ENCODE measurements at regions of chr6 and their contacts with region 1.

Region 1: DNA sequence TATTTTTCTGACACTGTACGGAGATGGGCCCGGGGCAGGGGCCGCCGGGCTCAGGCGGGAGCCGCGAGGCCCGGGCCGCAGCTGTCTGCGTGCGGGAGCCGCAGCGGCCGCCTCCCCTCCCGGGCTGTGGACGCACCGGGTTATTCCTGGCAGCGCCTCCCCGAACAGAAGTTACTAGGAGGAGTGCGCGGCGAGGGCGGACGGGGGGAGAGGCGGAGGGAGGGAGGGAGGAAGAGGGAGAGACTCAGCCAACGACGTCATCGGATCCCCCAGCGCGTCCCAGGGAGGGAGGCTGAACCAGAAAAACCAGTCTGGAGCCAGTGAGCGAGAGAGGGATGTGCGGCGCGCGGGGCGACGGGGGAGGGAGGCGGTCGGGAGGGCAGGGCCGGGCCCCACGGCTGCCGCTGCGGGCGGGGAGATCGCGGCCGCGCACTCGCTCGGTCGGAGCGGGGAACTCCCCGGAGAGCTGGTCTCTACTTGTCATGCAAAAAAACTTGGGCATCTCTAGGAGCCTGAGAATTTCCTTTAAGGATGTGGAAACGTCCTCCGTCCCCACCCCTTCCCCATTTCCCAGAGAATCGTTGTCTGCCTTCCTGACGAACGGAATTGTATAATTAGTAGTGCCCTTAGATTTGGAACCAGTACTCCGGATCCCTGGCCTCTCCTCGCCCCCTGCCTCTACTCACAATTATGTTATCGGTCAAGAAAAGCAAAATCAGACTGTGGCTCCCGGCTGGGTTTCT is 1.4 kb upstream of the HIVEP2 start:
- DNase-seq: peak; percentile 93
- ATAC-seq: peak; percentile 32
- H3K4me3 Mint-ChIP-seq: peak overlapping the region; percentile 91
- H3K27ac Mint-ChIP-seq: peak overlapping the region; percentile 94
- H3K4me1 Mint-ChIP-seq: peaks cover 34% of the 10 kb centered on the region
- H3K27me3 Mint-ChIP-seq: peaks cover 2% of the 10 kb centered on the region
- CTCF ChIP-seq: no peak

Region 2: GRCh38 chr6:142474531-142475289 is 471.6 kb before region 1 on chr6:
- CTCF ChIA-PET with region 1: no interaction called
- POLR2A ChIA-PET with region 1: no interaction called
- intact Hi-C with region 1: loop called (anchors 10 kb)
- DNase-seq: no peak
- ATAC-seq: no peak
- H3K4me3 Mint-ChIP-seq: no peak overlapping the region
- H3K27ac Mint-ChIP-seq: no peak overlapping the region
- H3K4me1 Mint-ChIP-seq: peaks cover 5% of the 10 kb centered on the region
- H3K27me3 Mint-ChIP-seq: no peaks in the 10 kb centered on the region
- CTCF ChIP-seq: peak; percentile 90

Region 3: GRCh38 chr6:142819603-142820337 is 126.6 kb before region 1 on chr6:
- CTCF ChIA-PET with region 1: no interaction called
- POLR2A ChIA-PET with region 1: interaction called, 11 read pairs
- intact Hi-C with region 1: loop called (anchors 5 kb)
- DNase-seq: peak; percentile 71
- ATAC-seq: peak; percentile 63
- H3K4me3 Mint-ChIP-seq: peak overlapping the region; percentile 85
- H3K27ac Mint-ChIP-seq: peak overlapping the region; percentile 98
- H3K4me1 Mint-ChIP-seq: peaks cover 80% of the 10 kb centered on the region
- H3K27me3 Mint-ChIP-seq: no peaks in the 10 kb centered on the region
- CTCF ChIP-seq: no peak

Region 4: DNA sequence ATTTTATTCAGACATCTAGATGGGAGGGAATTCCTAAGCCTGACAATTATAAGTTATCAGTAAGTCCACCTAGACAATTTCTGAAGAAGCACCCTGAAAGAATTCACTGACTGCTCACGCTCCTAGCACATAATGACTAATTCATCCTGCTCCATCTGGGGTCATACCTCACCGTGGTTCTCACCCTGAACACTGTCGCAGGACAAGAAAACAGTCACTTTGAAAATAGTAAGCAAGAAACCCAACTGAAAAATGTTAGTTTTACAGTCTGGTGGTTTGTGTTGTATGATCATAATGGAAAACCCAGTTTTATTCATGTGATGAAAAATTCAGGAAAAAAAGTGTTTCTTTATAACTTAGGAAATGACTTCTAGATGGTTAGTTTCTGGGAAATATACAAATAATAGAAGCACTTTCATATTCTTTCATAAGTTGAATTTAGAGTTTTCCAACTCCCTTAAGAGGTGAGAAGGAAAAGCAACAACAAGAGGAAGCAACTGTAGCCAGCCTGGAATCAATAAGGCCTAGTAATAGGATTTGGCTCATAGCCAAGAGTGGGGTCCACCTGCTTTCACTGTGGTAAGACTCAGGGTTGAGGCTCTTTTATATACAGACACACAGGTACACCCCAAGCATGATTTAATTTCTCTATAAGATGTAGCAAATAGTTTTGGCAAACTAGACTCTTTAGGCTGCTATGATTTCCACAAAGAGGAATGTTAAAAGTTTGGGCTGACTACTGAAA is 95.5 kb before region 1 on chr6:
- CTCF ChIA-PET with region 1: interaction called, 6 read pairs
- POLR2A ChIA-PET with region 1: interaction called, 12 read pairs
- intact Hi-C with region 1: no loop called
- DNase-seq: peak; percentile 68
- ATAC-seq: peak; percentile 64
- H3K4me3 Mint-ChIP-seq: peak overlapping the region; percentile 40
- H3K27ac Mint-ChIP-seq: peak overlapping the region; percentile 93
- H3K4me1 Mint-ChIP-seq: peaks cover 97% of the 10 kb centered on the region
- H3K27me3 Mint-ChIP-seq: no peaks in the 10 kb centered on the region
- CTCF ChIP-seq: no peak

Region 5: GRCh38 chr6:142885182-142885867 is 61.0 kb before region 1 on chr6:
- CTCF ChIA-PET with region 1: interaction called, 4 read pairs
- POLR2A ChIA-PET with region 1: interaction called, 12 read pairs
- intact Hi-C with region 1: loop called (anchors 2 kb)
- DNase-seq: peak; percentile 58
- ATAC-seq: peak; percentile 81
- H3K4me3 Mint-ChIP-seq: peak overlapping the region; percentile 90
- H3K27ac Mint-ChIP-seq: peak overlapping the region; percentile 100
- H3K4me1 Mint-ChIP-seq: peaks cover 85% of the 10 kb centered on the region
- H3K27me3 Mint-ChIP-seq: no peaks in the 10 kb centered on the region
- CTCF ChIP-seq: no peak

Region 6: DNA sequence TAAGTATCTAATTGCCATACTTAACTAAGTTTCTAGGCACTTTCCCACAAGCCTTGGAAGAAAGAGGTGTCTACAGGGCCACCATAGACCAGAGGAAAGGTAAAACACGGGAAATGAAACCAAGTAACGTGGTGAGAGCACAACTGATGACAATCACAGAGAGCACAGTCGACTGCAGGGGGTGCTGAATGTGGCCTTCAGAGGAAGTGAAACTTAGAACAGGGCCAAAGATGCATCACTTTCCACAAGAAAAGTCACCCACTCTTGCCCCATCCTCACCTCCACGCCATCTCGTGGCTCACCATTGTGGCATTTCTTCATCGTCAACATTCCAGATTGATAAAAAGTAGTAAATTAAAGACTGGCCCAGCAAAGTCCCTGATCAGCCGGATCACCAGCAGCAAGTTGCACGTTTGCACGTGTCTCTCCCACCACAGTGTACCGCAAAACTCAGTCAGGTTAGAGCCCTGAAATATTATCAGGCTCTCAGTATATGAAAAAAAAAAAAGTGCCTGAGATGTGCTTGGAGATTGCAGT is 32.8 kb before region 1 on chr6:
- CTCF ChIA-PET with region 1: interaction called, 4 read pairs
- POLR2A ChIA-PET with region 1: interaction called, 13 read pairs
- intact Hi-C with region 1: loop called (anchors 5 kb)
- DNase-seq: peak; percentile 88
- ATAC-seq: peak; percentile 88
- H3K4me3 Mint-ChIP-seq: peak overlapping the region; percentile 70
- H3K27ac Mint-ChIP-seq: peak overlapping the region; percentile 98
- H3K4me1 Mint-ChIP-seq: peaks cover 82% of the 10 kb centered on the region
- H3K27me3 Mint-ChIP-seq: no peaks in the 10 kb centered on the region
- CTCF ChIP-seq: no peak

Region 7: DNA sequence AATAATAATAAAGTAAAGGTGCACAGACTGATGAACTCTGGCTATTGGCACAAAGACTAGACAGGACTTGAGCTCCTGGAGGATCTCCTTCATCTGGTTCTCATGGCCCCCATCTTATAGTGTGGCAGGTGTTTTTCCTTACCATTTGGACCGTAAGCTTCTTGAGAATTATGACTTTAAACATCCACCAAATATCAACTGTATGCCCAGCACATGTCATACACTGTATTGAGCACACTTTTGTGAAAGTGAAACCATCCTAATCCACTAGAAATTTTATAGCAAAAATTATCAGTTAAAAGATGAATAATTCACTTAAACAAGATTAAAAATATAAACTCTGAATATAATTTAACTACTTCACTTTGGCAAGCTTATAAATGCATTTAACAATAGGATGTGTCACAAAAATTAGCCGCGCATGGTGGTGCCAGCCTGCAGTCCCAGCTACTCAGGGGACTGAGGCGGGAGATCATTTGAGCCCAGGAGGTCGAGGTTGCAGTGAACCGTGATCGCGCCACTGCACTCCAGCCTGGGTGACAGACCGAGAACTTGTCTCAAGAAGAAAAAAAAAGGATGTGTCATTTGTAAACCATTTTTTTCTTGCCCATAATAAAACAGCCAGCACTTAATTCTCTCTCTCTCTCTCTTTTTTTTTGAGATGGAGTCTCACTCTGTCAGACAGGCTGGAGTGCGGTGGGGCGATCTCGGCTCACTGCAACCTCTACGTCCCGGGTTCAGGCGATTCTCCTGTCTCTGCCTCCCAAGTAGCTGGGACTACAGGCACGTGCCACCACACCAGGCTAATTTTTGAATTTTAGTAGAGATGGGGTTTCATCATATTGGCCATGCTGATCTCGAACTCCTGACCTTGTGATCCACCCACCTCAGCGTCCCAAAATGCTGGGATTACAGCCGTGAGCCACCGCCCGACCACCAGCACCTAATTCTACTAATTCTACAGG is 10.5 kb before region 1 on chr6:
- CTCF ChIA-PET with region 1: interaction called, 19 read pairs
- POLR2A ChIA-PET with region 1: interaction called, 85 read pairs
- intact Hi-C with region 1: no loop called
- DNase-seq: peak; percentile 64
- ATAC-seq: peak; percentile 55
- H3K4me3 Mint-ChIP-seq: peak overlapping the region; percentile 69
- H3K27ac Mint-ChIP-seq: peak overlapping the region; percentile 93
- H3K4me1 Mint-ChIP-seq: peaks cover 92% of the 10 kb centered on the region
- H3K27me3 Mint-ChIP-seq: no peaks in the 10 kb centered on the region
- CTCF ChIP-seq: no peak

Region 8: GRCh38 chr6:142985281-142985680 is 38.9 kb after region 1 on chr6:
- CTCF ChIA-PET with region 1: no interaction called
- POLR2A ChIA-PET with region 1: no interaction called
- intact Hi-C with region 1: no loop called
- DNase-seq: no peak
- ATAC-seq: no peak
- H3K4me3 Mint-ChIP-seq: no peak overlapping the region
- H3K27ac Mint-ChIP-seq: no peak overlapping the region
- H3K4me1 Mint-ChIP-seq: no peaks in the 10 kb centered on the region
- H3K27me3 Mint-ChIP-seq: no peaks in the 10 kb centered on the region
- CTCF ChIP-seq: no peak